H1 (cell line): ENCODE measurements at regions of chr2 and their contacts with region 1.

Region 1: GRCh38 chr2:191218292-191218898 is 26.8 kb upstream of the MYO1B start:
- DNase-seq: peak; percentile 57 to 73
- H3K4me3 ChIP-seq: no peak overlapping the region
- H3K27ac ChIP-seq: no peak overlapping the region
- H3K4me1 ChIP-seq: peaks cover 0 to 3% (median 0%) of the 10 kb centered on the region in 4 experiments; a peak in 1 of 7 replicates
- H3K27me3 ChIP-seq: no peaks in the 10 kb centered on the region
- CTCF ChIP-seq: peak; percentile 37 to 85 (median 70)
- EP300 ChIP-seq: no peak
- POLR2A ChIP-seq: no peak
- RAD21 ChIP-seq: peak; percentile 83 to 86

Region 2: GRCh38 chr2:191165176-191165643 is 53.2 kb before region 1 on chr2:
- CTCF ChIA-PET with region 1: interaction called, 13 read pairs
- POLR2A ChIA-PET with region 1: no interaction called
- DNase-seq: no peak
- H3K4me3 ChIP-seq: no peak overlapping the region
- H3K27ac ChIP-seq: no peak overlapping the region
- H3K4me1 ChIP-seq: no peaks in the 10 kb centered on the region
- H3K27me3 ChIP-seq: no peaks in the 10 kb centered on the region
- CTCF ChIP-seq: peak in 2 of 3 experiments; percentile 60; a peak in 3 of 4 replicates
- EP300 ChIP-seq: no peak
- POLR2A ChIP-seq: no peak
- RAD21 ChIP-seq: peak; percentile 85 to 87

Region 3: GRCh38 chr2:191206613-191207481 is 11.5 kb before region 1 on chr2:
- CTCF ChIA-PET with region 1: interaction called, 35 read pairs
- POLR2A ChIA-PET with region 1: no interaction called
- DNase-seq: no peak
- H3K4me3 ChIP-seq: no peak overlapping the region
- H3K27ac ChIP-seq: no peak overlapping the region
- H3K4me1 ChIP-seq: no peaks in the 10 kb centered on the region
- H3K27me3 ChIP-seq: no peaks in the 10 kb centered on the region
- CTCF ChIP-seq: no peak
- EP300 ChIP-seq: no peak
- POLR2A ChIP-seq: no peak
- RAD21 ChIP-seq: no peak

Region 4: GRCh38 chr2:191363267-191363666 is 144.9 kb after region 1 on chr2:
- CTCF ChIA-PET with region 1: interaction called, 12 read pairs
- POLR2A ChIA-PET with region 1: no interaction called
- DNase-seq: no peak
- H3K4me3 ChIP-seq: no peak overlapping the region
- H3K27ac ChIP-seq: no peak overlapping the region
- H3K4me1 ChIP-seq: no peaks in the 10 kb centered on the region
- H3K27me3 ChIP-seq: no peaks in the 10 kb centered on the region
- CTCF ChIP-seq: no peak
- EP300 ChIP-seq: no peak
- POLR2A ChIP-seq: no peak
- RAD21 ChIP-seq: no peak

Region 5: DNA sequence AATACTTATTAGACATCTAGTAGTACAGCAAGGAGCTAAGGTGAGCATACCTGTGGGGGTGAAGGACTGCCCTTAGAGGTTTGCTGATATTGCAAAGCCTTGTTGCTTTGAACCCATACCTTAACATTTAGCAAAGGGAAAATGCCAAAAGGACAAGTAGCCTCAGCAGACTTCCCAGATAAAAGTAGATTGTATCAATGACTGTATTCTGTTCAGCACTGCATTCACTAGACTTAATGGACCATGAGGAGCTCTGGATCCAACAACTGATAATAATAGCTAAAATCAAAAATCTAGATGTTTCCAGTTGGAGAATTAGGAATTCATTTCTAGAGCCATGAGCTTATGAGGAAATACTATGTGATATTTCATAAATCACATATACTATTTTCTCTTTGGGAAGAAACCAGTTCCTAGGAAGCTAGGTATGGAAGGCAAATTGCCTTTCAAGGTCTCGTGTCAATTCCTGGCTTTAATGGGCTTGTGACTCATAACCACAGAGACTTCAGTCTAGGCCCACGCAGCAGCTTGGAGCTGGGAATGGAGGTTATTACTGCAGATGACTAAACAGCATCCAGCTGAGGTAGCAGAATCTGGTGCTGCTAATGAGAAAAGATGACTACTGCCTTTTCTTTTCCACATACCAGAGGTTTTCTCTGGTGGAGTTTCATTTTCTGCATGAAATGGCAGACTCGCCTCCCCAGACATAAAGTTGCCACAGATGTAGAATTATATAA is 268.4 kb after region 1 on chr2:
- CTCF ChIA-PET with region 1: interaction called, 10 read pairs
- POLR2A ChIA-PET with region 1: no interaction called
- DNase-seq: no peak
- H3K4me3 ChIP-seq: no peak overlapping the region
- H3K27ac ChIP-seq: no peak overlapping the region
- H3K4me1 ChIP-seq: no peaks in the 10 kb centered on the region
- H3K27me3 ChIP-seq: no peaks in the 10 kb centered on the region
- CTCF ChIP-seq: no peak
- EP300 ChIP-seq: no peak
- POLR2A ChIP-seq: no peak
- RAD21 ChIP-seq: no peak